HepG2 (cell line): ENCODE measurements at regions of chr9 and their contacts with region 1.

Region 1: DNA sequence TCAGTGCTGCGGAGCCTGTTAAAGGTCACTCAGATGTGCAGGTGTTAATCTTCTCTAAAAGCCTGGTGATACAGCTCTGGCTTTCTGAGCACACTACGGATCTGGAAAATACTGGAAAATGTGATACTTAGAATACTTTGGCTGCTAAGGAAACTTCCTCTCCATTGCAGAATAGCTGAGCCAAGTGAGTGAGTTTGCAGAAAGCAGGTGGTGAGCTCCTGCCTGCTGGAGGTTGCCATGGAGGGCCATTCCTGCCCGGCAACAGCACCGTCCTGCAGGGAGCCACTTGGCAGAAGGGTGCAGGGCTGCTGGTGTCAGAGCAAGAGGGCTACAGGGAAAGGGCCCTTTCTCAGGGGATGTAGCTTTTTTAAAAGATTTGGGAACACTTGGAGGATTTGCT is 40.7 kb downstream of the SECISBP2 start:
- DNase-seq: no peak
- ATAC-seq: no peak
- H3K4me3 ChIP-seq: no peak overlapping the region
- H3K27ac ChIP-seq: no peak overlapping the region
- H3K4me1 ChIP-seq: peaks cover 71% of the 10 kb centered on the region
- H3K27me3 ChIP-seq: no peaks in the 10 kb centered on the region
- CTCF ChIP-seq: no peak
- EP300 ChIP-seq: no peak
- POLR2A ChIP-seq: no peak
- RAD21 ChIP-seq: no peak

Region 2: GRCh38 chr9:89310475-89311346 is 48.3 kb before region 1 on chr9 and contains the start of gene CKS2:
- CTCF ChIA-PET with region 1: no interaction called
- POLR2A ChIA-PET with region 1: interaction called, 12 read pairs
- in situ Hi-C with region 1: no loop called
- intact Hi-C with region 1: no loop called
- DNase-seq: peak; percentile 99
- ATAC-seq: peak; percentile 91
- H3K4me3 ChIP-seq: peak within 1 kb of the TSS; percentile 88 to 94 (median 88)
- H3K27ac ChIP-seq: peak within 1 kb of the TSS; percentile 96
- H3K4me1 ChIP-seq: peaks cover 35% of the 10 kb centered on the region
- H3K27me3 ChIP-seq: no peaks in the 10 kb centered on the region; a peak in 1 of 5 replicates
- CTCF ChIP-seq: 0 out of 2 replicates have a peak, but pooled peaks have one; percentile 27
- EP300 ChIP-seq: peak in 1 of 2 experiments; percentile 81; a peak in 3 of 4 replicates
- POLR2A ChIP-seq: peak; percentile 93 to 99
- RAD21 ChIP-seq: peak; percentile 49
- total RNA-seq, gene CKS2: 317 and 498 TPM in 2 replicates

Region 3: GRCh38 chr9:89318123-89319014 is 40.6 kb before region 1 on chr9 and contains the start of gene SECISBP2:
- CTCF ChIA-PET with region 1: no interaction called
- POLR2A ChIA-PET with region 1: interaction called, 17 read pairs
- in situ Hi-C with region 1: no loop called
- intact Hi-C with region 1: loop called (anchors 1 kb)
- DNase-seq: peak; percentile 93
- ATAC-seq: peak; percentile 95
- H3K4me3 ChIP-seq: peak within 1 kb of the TSS; percentile 71 to 81 (median 71)
- H3K27ac ChIP-seq: peak within 1 kb of the TSS; percentile 98
- H3K4me1 ChIP-seq: peaks cover 78% of the 10 kb centered on the region
- H3K27me3 ChIP-seq: no peaks in the 10 kb centered on the region
- CTCF ChIP-seq: peak; percentile 78
- EP300 ChIP-seq: peak in 1 of 2 experiments; percentile 31; a peak in 2 of 4 replicates
- POLR2A ChIP-seq: peak; percentile 77 to 94
- RAD21 ChIP-seq: peak; percentile 47
- total RNA-seq, gene SECISBP2: 32.4 and 32.9 TPM in 2 replicates